ENCODE measurements at regions of chr1 and their contacts with region 1.

Region 1: GRCh38 chr1:206734499-206735142 is 36.0 kb upstream of the IL19 start:
- DNase-seq: no peak
- H3K4me3 ChIP-seq: no peak overlapping the region
- H3K27ac ChIP-seq: no peak overlapping the region
- H3K4me1 ChIP-seq: peaks cover 0 to 13% (median 3%) of the 10 kb centered on the region in 4 donors
- H3K27me3 ChIP-seq: no peaks in the 10 kb centered on the region
- CTCF ChIP-seq: peak; percentile 50 to 54

Region 2: GRCh38 chr1:206684478-206685333 is 49.9 kb before region 1 on chr1 and contains the start of gene MAPKAPK2:
- intact Hi-C with region 1: no loop called
- DNase-seq: peak; percentile 77 to 88
- H3K4me3 ChIP-seq: peak within 1 kb of the TSS; percentile 73 to 75
- H3K27ac ChIP-seq: peak within 1 kb of the TSS; percentile 93 to 96
- H3K4me1 ChIP-seq: peaks cover 0 to 44% (median 33%) of the 10 kb centered on the region in 4 donors
- H3K27me3 ChIP-seq: no peaks in the 10 kb centered on the region
- CTCF ChIP-seq: no peak

Region 3: DNA sequence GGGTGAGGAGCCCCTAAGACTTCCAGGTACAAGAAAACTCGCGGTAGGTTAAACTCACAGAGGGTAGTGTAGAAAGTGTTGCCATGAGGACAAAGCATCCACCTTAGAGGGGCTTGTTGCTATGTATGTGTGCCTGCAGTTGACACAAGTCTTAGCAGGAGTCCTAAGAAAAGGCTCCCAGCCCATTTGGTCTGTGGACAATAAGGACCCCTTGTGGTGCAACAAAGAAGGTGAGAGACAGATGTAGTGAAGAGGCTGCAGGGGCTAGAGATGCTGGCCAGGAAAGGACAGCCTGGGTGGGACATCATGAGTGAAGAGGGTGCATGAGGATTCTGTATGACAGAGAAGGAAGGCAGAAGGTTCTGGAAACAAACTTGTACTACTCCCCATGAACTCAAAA is 74.0 kb after region 1 on chr1:
- intact Hi-C with region 1: no loop called
- DNase-seq: no peak
- H3K4me3 ChIP-seq: no peak overlapping the region
- H3K27ac ChIP-seq: no peak overlapping the region
- H3K4me1 ChIP-seq: no peaks in the 10 kb centered on the region
- H3K27me3 ChIP-seq: peaks cover 0 to 8% of the 10 kb centered on the region in 2 donors
- CTCF ChIP-seq: peak; percentile 12 to 25

Region 4: DNA sequence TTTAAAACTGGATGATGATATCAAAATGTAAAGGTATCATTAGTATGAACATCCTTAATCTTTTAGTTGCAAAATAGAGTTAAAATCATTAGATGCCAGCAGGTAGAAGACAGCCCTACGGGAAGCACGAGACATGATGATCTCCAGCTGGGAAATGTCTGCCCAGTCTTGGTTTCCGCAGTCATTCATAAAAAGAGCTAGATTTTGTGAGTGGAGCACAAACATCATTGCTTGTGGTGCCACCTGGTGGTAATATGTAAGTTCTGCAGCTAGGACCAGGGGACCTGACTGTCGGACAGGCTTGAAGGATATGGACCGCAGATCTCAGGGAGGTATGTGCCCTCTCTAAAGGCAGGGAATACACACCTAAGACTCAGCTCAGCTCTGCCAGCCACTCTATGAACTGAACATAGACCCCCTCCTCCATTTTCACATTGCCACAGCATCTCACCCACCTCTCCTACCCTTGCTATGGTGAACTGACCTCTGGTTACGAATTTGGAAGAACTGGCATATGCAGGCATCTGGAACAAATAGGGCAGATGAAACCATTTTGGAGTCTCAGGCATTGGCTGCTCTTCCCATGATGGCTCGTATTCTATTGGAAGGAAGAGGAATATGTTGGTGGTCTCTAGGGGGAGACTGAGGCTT is 177.9 kb after region 1 on chr1:
- intact Hi-C with region 1: loop called (anchors 10 kb)
- DNase-seq: peak; percentile 74 to 75
- H3K4me3 ChIP-seq: no peak overlapping the region
- H3K27ac ChIP-seq: no peak overlapping the region
- H3K4me1 ChIP-seq: peaks cover 0 to 14% (median 12%) of the 10 kb centered on the region in 4 donors
- H3K27me3 ChIP-seq: peaks cover 0 to 45% of the 10 kb centered on the region in 2 donors
- CTCF ChIP-seq: peak; percentile 82 to 84

Region 5: DNA sequence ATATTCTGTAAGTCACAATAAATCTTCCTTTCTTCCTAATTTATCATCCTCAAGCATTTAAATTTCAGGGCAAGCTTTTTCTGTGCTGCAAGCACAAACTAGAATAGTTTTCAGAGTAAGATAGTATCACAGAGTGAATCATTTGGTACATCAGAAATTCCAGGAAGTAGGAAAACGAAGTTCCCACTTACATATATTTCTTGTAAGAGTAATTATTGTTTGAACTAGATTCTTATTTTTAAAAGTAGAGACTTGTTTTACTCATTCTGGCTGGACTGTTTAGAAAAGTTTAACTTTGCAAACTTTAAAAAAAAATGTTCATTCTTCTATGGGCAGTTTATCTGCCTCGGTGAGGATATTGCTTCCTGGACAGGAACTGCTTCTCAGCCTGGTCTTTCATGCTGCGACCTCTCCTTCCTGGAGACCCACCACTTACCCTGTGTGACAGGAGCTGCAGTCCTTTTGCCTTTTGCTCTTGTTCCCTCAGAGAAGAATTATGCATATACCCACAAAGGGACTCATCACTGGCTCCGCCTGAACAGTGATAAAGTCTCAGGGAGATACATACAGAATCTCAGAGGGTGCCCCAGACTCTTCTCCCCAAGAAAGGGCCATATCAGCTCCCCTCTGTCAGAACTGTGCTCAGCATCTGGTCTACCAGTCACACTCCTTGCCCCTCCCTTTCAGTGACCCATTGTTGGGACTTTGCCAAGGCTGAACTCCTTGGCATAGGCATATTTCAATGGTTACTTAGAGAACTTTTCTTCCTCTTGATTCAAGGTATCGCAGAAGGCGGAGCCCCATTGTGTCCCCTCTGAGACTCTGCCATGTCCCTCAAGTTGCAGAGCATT is 484.1 kb after region 1 on chr1:
- intact Hi-C with region 1: no loop called
- DNase-seq: peak in 1 of 2 donors; percentile 21
- H3K4me3 ChIP-seq: no peak overlapping the region
- H3K27ac ChIP-seq: no peak overlapping the region
- H3K4me1 ChIP-seq: peaks cover 0 to 24% (median 11%) of the 10 kb centered on the region in 4 donors
- H3K27me3 ChIP-seq: no peaks in the 10 kb centered on the region
- CTCF ChIP-seq: no peak